ENCODE measurements at regions of chr14 and their contacts with region 1.

Region 1: DNA sequence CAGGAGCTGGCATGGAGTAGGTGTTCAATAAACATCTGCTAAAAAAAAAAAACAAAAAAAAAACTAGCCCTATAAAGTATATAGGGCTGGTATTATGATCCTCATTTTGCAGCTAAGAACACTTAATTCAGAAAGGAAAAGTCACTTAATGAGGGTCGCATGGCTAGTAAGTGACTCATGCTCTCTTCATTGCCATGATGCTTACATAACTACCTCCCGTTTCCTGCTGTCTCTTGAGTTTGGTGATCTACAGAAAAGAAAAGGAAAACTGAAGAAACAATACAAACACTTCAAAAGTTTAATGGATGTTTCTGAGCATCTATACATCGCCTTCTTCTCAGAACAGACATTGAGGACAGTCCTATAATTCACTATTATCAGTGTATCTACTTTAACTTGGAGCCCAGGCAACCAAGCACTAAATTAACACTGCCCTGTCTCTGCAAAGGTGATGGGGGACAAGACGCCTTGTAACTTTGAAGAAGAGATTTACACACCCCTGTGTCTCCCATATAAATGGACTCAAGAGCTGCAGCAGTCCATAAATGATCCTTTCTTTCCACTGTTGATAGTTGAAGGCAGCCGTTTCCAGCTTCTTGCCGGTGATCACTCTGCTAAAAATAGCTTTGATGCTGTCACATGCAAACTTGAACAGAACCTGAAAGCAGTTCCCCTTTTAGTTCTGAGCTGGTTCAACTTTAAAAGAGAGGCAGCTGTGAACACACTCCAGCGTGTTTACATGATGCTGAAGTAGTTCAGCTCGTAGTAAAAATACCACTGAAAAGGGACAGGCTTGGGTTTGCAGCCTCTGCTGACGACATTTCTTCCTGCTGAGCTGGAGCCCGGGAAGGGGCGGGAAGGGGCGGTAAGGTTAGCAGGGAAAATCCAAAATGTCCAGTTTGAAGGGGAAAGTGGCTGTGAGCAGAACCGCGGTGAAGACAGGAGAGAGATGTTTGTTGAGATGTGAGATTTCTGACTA is 113.3 kb downstream of the FOXN3 start:
- DNase-seq: peak; percentile 90
- ATAC-seq: peak; percentile 69
- H3K4me3 ChIP-seq: peak overlapping the region; percentile 26 to 61 (median 47)
- H3K4me3 Mint-ChIP-seq: peak overlapping the region; percentile 95
- H3K27ac ChIP-seq: peak overlapping the region; percentile 93 to 99
- H3K27ac Mint-ChIP-seq: peak overlapping the region; percentile 100
- H3K4me1 ChIP-seq: peaks cover 66 to 75% of the 10 kb centered on the region in 2 donors
- H3K4me1 Mint-ChIP-seq: peaks cover 77% of the 10 kb centered on the region
- H3K27me3 ChIP-seq: no peaks in the 10 kb centered on the region
- H3K27me3 Mint-ChIP-seq: no peaks in the 10 kb centered on the region
- CTCF ChIP-seq: no peak

Region 2: GRCh38 chr14:89185919-89186855 is 117.6 kb before region 1 on chr14:
- CTCF ChIA-PET with region 1: interaction called, 3 read pairs
- POLR2A ChIA-PET with region 1: no interaction called
- intact Hi-C with region 1: loop called (anchors 2 kb)
- DNase-seq: no peak
- ATAC-seq: no peak
- H3K4me3 ChIP-seq: peak overlapping the region in 1 of 5 experiments; percentile 11
- H3K4me3 Mint-ChIP-seq: peak overlapping the region; percentile 79
- H3K27ac ChIP-seq: peak overlapping the region in 1 of 2 donors; percentile 64
- H3K27ac Mint-ChIP-seq: peak overlapping the region; percentile 94
- H3K4me1 ChIP-seq: peaks cover 21 to 24% of the 10 kb centered on the region in 2 donors
- H3K4me1 Mint-ChIP-seq: peaks cover 41% of the 10 kb centered on the region
- H3K27me3 ChIP-seq: no peaks in the 10 kb centered on the region
- H3K27me3 Mint-ChIP-seq: no peaks in the 10 kb centered on the region
- CTCF ChIP-seq: no peak

Region 3: DNA sequence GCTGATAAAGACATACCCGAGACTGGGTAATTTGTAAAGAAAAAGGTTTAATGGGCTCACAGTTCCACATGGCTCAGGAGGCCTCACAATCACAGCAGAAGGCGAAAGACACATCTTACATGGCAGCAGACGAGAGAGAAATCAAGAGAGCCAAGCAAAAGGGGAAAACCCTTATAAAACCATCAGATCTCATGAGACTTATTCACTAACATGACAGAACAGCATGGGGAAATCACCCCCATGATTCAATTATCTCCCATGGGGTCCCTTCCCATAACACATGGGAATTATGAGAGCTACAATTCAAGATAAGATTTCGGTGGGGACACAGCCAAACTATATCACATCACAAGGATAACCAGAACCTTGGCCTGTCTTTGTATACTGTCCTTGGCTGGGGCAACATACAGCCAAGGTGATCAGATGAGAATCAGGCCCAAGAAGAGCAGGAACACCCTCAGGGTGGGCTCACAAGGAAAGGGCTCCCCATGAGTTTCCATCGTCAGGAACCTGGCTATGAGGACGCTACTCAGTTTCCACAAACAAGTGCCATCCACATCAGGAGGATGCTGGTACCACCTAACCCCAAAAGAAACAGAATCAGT is 39.4 kb before region 1 on chr14:
- CTCF ChIA-PET with region 1: interaction called, 4 read pairs
- POLR2A ChIA-PET with region 1: no interaction called
- intact Hi-C with region 1: loop called (anchors 2 kb)
- DNase-seq: peak; percentile 66
- ATAC-seq: peak; percentile 87
- H3K4me3 ChIP-seq: peak overlapping the region in 1 of 5 experiments; percentile 6
- H3K4me3 Mint-ChIP-seq: peak overlapping the region; percentile 64
- H3K27ac ChIP-seq: peak overlapping the region in 1 of 2 donors; percentile 44
- H3K27ac Mint-ChIP-seq: peak overlapping the region; percentile 56
- H3K4me1 ChIP-seq: peaks cover 27 to 36% of the 10 kb centered on the region in 2 donors
- H3K4me1 Mint-ChIP-seq: peaks cover 58% of the 10 kb centered on the region
- H3K27me3 ChIP-seq: no peaks in the 10 kb centered on the region
- H3K27me3 Mint-ChIP-seq: no peaks in the 10 kb centered on the region
- CTCF ChIP-seq: no peak

Region 4: GRCh38 chr14:89336338-89336737 is 32.6 kb after region 1 on chr14:
- CTCF ChIA-PET with region 1: interaction called, 24 read pairs
- POLR2A ChIA-PET with region 1: interaction called, 5 read pairs
- intact Hi-C with region 1: loop called (anchors 1 kb)
- DNase-seq: peak; percentile 69
- ATAC-seq: peak; percentile 69
- H3K4me3 ChIP-seq: no peak overlapping the region
- H3K4me3 Mint-ChIP-seq: no peak overlapping the region
- H3K27ac ChIP-seq: peak overlapping the region in 1 of 2 donors; percentile 31
- H3K27ac Mint-ChIP-seq: peak overlapping the region; percentile 62
- H3K4me1 ChIP-seq: peaks cover 39 to 42% of the 10 kb centered on the region in 2 donors
- H3K4me1 Mint-ChIP-seq: peaks cover 67% of the 10 kb centered on the region
- H3K27me3 ChIP-seq: no peaks in the 10 kb centered on the region
- H3K27me3 Mint-ChIP-seq: no peaks in the 10 kb centered on the region
- CTCF ChIP-seq: peak; percentile 52

Region 5: GRCh38 chr14:89384023-89384422 is 80.3 kb after region 1 on chr14:
- CTCF ChIA-PET with region 1: interaction called, 16 read pairs
- POLR2A ChIA-PET with region 1: interaction called, 20 read pairs
- intact Hi-C with region 1: loop called (anchors 1 kb)
- DNase-seq: peak; percentile 95
- ATAC-seq: peak; percentile 96
- H3K4me3 ChIP-seq: peak overlapping the region in 1 of 5 experiments; percentile 35
- H3K4me3 Mint-ChIP-seq: peak overlapping the region; percentile 46
- H3K27ac ChIP-seq: peak overlapping the region; percentile 69 to 72
- H3K27ac Mint-ChIP-seq: peak overlapping the region; percentile 86
- H3K4me1 ChIP-seq: peaks cover 58 to 65% of the 10 kb centered on the region in 2 donors
- H3K4me1 Mint-ChIP-seq: peaks cover 70% of the 10 kb centered on the region
- H3K27me3 ChIP-seq: no peaks in the 10 kb centered on the region
- H3K27me3 Mint-ChIP-seq: no peaks in the 10 kb centered on the region
- CTCF ChIP-seq: no peak

Region 6: GRCh38 chr14:89720741-89721315 is 417.1 kb after region 1 on chr14:
- CTCF ChIA-PET with region 1: no interaction called
- POLR2A ChIA-PET with region 1: interaction called, 3 read pairs
- intact Hi-C with region 1: loop called (anchors 1 kb)
- DNase-seq: peak; percentile 91
- ATAC-seq: peak; percentile 93
- H3K4me3 ChIP-seq: peak overlapping the region in 2 of 5 experiments; percentile 26 to 40
- H3K4me3 Mint-ChIP-seq: peak overlapping the region; percentile 75
- H3K27ac ChIP-seq: peak overlapping the region; percentile 93 to 95
- H3K27ac Mint-ChIP-seq: peak overlapping the region; percentile 95
- H3K4me1 ChIP-seq: peaks cover 59 to 62% of the 10 kb centered on the region in 2 donors
- H3K4me1 Mint-ChIP-seq: peaks cover 62% of the 10 kb centered on the region
- H3K27me3 ChIP-seq: no peaks in the 10 kb centered on the region
- H3K27me3 Mint-ChIP-seq: no peaks in the 10 kb centered on the region
- CTCF ChIP-seq: no peak